Panc1 (cell line): ENCODE measurements at regions of chr16 and their contacts with region 1.

Region 1: DNA sequence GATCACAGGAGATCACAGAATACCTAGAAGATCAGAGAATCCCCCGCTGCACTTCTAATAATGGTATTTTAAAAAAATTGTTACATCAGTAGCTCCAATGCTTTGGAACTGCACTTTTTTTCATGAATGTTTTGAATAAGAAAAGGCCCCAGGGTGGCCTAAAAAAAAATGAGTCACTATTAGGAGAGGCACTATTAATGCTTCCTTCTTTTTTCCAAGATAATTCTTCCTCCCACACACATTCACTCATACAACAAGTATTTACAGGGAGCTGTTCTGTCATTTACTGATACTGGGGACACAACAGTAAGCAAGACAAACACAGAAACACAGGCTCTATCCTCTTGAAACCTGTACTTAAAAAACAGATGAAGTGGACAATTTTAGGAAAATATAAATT is 675 bp upstream of the PDZD9 start:
- DNase-seq: no peak
- ATAC-seq: no peak
- H3K4me3 ChIP-seq: peak overlapping the region in 1 of 2 experiments; percentile 41; a peak in 1 of 4 replicates
- H3K27ac ChIP-seq: no peak overlapping the region
- H3K4me1 ChIP-seq: no peaks in the 10 kb centered on the region; the same call in 1 of the 2 replicates
- H3K27me3 ChIP-seq: no peaks in the 10 kb centered on the region
- CTCF ChIP-seq: no peak

Region 2: DNA sequence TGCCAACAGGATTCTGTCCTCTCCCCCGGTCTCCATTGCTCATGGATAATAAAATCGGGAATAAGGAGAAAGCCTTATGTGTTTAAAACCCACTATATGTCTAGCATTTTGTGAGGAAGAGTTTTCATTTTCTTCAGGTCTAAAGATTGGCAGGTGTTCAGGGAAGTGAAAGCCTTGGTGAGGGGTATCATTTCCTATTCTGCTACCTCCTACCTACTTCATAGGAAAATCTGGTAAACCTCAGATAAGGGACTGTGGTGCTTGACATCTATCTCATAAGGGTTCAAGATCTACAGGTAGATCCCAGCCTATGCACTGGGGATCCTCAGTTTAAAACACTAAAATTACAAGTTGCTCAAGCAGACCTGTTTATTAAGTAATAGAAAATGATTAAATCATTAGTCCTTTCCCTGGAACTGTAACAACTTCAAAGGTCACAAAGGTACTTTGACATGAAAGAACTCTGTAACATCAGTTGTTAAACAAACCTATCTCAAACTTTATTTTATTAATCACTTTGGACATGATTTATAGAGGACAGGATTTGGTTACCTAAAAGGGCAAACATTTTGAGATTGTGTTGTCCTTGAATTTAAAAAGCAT is 12.8 kb after region 1 on chr16:
- CTCF ChIA-PET with region 1: interaction called, 9 read pairs
- POLR2A ChIA-PET with region 1: no interaction called
- in situ Hi-C with region 1: no loop called
- intact Hi-C with region 1: loop called (anchors 1 kb)
- DNase-seq: no peak
- ATAC-seq: no peak
- H3K4me3 ChIP-seq: no peak overlapping the region
- H3K27ac ChIP-seq: no peak overlapping the region
- H3K4me1 ChIP-seq: peaks cover 32% of the 10 kb centered on the region
- H3K27me3 ChIP-seq: no peaks in the 10 kb centered on the region
- CTCF ChIP-seq: no peak

Region 3: GRCh38 chr16:22077700-22078313 is 76.2 kb after region 1 on chr16:
- CTCF ChIA-PET with region 1: interaction called, 34 read pairs
- POLR2A ChIA-PET with region 1: no interaction called
- in situ Hi-C with region 1: no loop called
- intact Hi-C with region 1: loop called (anchors 2 kb)
- DNase-seq: no peak
- ATAC-seq: peak; percentile 85
- H3K4me3 ChIP-seq: no peak overlapping the region
- H3K27ac ChIP-seq: no peak overlapping the region
- H3K4me1 ChIP-seq: peaks cover 11% of the 10 kb centered on the region; the same call in 1 of the 2 replicates
- H3K27me3 ChIP-seq: no peaks in the 10 kb centered on the region
- CTCF ChIP-seq: peak; percentile 92